ENCODE measurements at regions of chr12 and their contacts with region 1.

Region 1: GRCh38 chr12:42482445-42483237 is 106.9 kb downstream of the PRICKLE1 start:
- DNase-seq: peak; percentile 73
- H3K4me3 ChIP-seq: peak overlapping the region; percentile 65
- H3K27ac ChIP-seq: no peak overlapping the region
- H3K4me1 ChIP-seq: peaks cover 19% of the 10 kb centered on the region
- CTCF ChIP-seq: peak; percentile 88

Region 2: GRCh38 chr12:42568952-42569915 is 86.6 kb after region 1 on chr12:
- CTCF ChIA-PET with region 1: interaction called, 3 read pairs
- POLR2A ChIA-PET with region 1: no interaction called
- intact Hi-C with region 1: loop called (anchors 1 kb)
- DNase-seq: peak; percentile 63
- H3K4me3 ChIP-seq: no peak overlapping the region
- H3K27ac ChIP-seq: no peak overlapping the region
- H3K4me1 ChIP-seq: no peaks in the 10 kb centered on the region
- CTCF ChIP-seq: peak; percentile 84

Measured in OCI-LY7 (cell line).